Right ventricle myocardium inferior (tissue), 1 donor: ENCODE measurements at regions of chr7 and their contacts with region 1.

Region 1: DNA sequence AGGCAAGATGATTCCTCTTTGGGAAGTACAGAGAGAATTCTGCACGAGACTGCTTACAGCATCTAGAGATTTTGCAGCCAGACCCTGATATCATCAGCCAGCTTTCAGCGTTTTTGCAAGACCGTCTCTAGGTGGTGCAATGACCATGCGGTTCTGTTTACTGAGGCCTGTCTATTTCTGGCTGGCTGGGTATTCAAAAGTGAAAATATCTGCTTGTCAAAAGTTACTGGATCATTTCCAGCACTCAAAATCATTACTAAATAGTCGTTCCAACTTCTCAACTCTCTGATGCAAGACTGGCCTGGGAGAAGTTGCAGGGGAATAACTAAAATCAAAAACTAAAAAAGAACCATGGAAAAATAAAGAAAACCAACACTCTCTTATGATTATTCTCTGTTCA is 240.1 kb downstream of the ELMO1 start:
- DNase-seq: peak; percentile 66
- ATAC-seq: peak; percentile 90

Region 2: DNA sequence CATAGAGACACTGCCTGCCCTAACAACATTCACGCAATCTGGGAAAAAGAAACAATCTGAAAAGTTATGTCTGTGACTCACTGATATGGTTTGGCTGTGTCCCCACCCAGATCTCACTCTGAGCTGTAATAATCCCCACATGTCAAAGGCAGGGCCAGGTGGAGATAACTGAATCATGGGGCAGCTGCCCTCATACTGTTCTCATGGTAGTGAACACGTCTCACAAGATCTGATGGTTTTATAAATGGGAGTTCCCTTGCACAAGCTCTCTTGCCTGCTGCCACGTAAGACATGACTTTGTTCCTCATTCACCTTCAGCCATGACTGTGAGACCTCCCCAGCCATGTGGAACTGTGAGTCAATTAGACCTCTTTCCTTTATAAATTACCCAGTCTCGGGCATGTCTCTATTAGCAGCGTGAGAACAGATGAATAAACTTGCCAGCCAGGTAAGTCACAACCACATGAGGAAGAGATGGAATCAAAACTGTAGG is 142.7 kb before region 1 on chr7:
- intact Hi-C with region 1: no loop called
- DNase-seq: no peak
- ATAC-seq: no peak

Region 3: GRCh38 chr7:37284805-37285231 is 76.3 kb after region 1 on chr7:
- intact Hi-C with region 1: loop called (anchors 10 kb)
- DNase-seq: peak; percentile 55
- ATAC-seq: peak; percentile 46

Region 4: DNA sequence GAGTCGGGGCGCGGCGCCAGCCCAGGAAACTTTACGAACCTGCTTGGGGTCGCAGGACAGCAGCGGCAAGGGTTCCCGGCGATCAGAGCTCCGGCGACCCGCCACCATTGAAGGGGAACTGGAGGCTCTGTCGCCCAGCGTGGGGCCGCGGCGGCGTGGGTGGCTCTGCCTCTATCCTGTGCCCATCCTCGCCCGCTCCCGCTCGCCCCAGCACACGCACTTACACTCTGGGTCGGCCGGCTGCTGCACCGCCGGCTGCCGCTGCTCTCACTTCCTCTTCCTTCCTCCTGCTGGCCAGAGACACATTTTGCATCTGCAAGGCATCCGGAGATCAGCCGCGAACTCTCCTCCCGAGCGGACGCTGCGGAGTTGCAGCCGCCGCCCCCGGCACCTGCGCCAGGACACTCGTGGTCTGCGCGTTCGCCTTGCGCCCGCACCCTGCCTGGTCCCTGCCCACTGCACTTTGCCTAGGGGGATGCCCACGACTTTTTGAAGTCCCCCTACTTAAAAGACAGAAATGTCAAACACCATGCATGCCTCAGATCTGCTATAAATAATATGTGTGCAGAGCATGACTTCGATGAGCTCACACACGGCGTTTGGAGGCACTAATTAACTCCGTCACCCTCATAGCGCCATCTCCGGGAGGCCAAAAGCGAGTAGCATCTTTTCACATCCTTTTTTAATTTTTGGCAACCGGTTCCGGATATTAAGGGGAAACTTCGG is 240.3 kb after region 1 on chr7 and contains the start of gene ELMO1:
- intact Hi-C with region 1: loop called (anchors 5 kb)
- DNase-seq: peak; percentile 92
- ATAC-seq: peak; percentile 88
- total RNA-seq, gene ELMO1: 13.8 TPM

Region 5: GRCh38 chr7:37504801-37505200 is 296.3 kb after region 1 on chr7:
- intact Hi-C with region 1: loop called (anchors 5 kb)
- DNase-seq: no peak
- ATAC-seq: no peak

Region 6: DNA sequence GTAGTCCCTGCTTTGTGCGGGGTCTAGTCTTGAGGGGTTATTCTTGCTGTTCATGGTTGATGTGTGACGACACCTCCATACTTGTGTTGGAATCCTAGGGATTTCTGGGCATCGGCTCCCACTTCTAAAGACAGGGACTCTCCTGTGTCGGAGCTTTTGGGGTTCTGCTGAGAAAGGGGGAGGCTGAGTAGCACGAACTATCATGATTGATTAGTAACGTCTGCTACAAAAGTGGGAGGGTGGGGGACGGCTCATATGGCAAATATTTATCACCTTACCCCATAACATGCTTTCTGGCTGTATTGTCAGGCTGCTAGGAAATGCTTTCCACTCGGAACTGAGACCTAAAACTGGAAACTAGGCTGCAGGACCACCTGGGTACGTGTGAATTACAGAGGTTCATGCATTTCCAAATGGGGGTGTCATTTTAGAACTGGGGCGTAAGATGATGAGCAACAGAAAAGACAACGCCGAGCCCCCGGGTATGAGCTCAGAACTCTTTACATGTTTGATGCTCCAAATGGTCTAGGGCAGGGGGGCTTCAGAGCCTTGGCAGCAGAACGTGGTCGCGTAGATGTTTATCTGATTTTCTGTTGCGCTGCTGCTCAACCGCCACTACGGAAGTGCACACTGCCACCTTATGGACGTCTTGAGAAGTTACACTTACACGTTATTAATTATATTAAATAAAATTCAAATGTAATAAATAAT is 624.7 kb after region 1 on chr7:
- intact Hi-C with region 1: loop called (anchors 2 kb)
- DNase-seq: peak; percentile 72
- ATAC-seq: no peak